ENCODE measurements at regions of chr12 and their contacts with region 1.

Region 1: GRCh38 chr12:133106253-133106652 is 23.8 kb downstream of the ZNF891 start:
- DNase-seq: no peak
- ATAC-seq: no peak
- H3K4me3 ChIP-seq: no peak overlapping the region
- H3K27ac ChIP-seq: no peak overlapping the region
- H3K4me1 ChIP-seq: no peaks in the 10 kb centered on the region
- H3K27me3 ChIP-seq: no peaks in the 10 kb centered on the region
- CTCF ChIP-seq: no peak
- EP300 ChIP-seq: no peak
- POLR2A ChIP-seq: no peak
- RAD21 ChIP-seq: no peak

Region 2: GRCh38 chr12:132858718-132859266 is 247.5 kb before region 1 on chr12:
- CTCF ChIA-PET with region 1: no interaction called
- POLR2A ChIA-PET with region 1: no interaction called
- RAD21 ChIA-PET with region 1: no interaction called
- SMC1A ChIA-PET with region 1: no interaction called
- in situ Hi-C with region 1: no loop called
- intact Hi-C with region 1: no loop called
- DNase-seq: no peak
- ATAC-seq: no peak
- H3K4me3 ChIP-seq: no peak overlapping the region
- H3K27ac ChIP-seq: no peak overlapping the region
- H3K4me1 ChIP-seq: no peaks in the 10 kb centered on the region
- H3K27me3 ChIP-seq: no peaks in the 10 kb centered on the region
- CTCF ChIP-seq: no peak
- EP300 ChIP-seq: no peak
- POLR2A ChIP-seq: no peak
- RAD21 ChIP-seq: no peak

Region 3: DNA sequence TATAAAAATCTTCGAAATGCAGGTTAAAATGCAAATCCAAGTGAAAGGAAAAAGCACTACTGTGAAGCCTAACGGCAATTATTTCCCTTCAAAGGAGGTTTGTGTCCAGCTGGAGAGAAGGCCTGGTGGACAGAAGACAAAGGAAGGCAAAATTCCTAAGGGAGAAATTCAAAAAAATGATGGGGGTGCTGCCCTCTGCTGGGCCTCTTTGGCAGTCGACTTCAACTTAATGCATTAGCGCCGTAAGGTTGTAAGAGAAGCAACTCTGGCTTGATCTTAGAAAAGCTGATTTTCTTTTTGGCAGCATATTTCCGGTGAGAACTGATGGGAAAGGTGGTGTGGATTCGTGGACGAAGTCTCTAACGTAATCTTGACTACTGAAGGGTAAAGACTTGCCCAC is 184.6 kb before region 1 on chr12:
- CTCF ChIA-PET with region 1: no interaction called
- POLR2A ChIA-PET with region 1: no interaction called
- RAD21 ChIA-PET with region 1: no interaction called
- SMC1A ChIA-PET with region 1: no interaction called
- in situ Hi-C with region 1: loop called (anchors 5 kb)
- intact Hi-C with region 1: no loop called
- DNase-seq: no peak
- ATAC-seq: no peak
- H3K4me3 ChIP-seq: no peak overlapping the region
- H3K27ac ChIP-seq: no peak overlapping the region
- H3K4me1 ChIP-seq: no peaks in the 10 kb centered on the region
- H3K27me3 ChIP-seq: no peaks in the 10 kb centered on the region
- CTCF ChIP-seq: 0 out of 6 replicates have a peak, but pooled peaks of 1 of the 3 experiments have one; percentile 14
- EP300 ChIP-seq: no peak
- POLR2A ChIP-seq: no peak
- RAD21 ChIP-seq: no peak

Region 4: DNA sequence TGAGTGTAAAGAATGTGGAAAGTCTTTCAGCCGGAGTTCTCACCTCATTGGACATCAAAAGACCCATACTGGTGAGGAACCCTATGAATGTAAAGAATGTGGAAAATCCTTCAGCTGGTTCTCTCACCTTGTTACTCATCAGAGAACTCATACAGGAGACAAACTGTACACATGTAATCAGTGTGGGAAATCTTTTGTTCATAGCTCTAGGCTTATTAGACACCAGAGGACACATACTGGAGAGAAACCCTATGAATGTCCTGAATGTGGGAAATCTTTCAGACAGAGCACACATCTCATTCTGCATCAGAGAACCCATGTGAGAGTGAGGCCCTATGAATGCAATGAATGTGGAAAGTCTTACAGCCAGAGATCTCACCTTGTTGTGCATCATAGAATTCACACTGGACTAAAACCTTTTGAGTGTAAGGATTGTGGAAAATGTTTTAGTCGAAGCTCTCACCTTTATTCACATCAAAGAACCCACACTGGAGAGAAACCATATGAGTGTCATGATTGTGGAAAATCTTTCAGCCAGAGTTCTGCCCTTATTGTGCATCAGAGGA is 50.0 kb after region 1 on chr12:
- CTCF ChIA-PET with region 1: no interaction called
- POLR2A ChIA-PET with region 1: no interaction called
- RAD21 ChIA-PET with region 1: no interaction called
- SMC1A ChIA-PET with region 1: no interaction called
- in situ Hi-C with region 1: no loop called
- intact Hi-C with region 1: no loop called
- DNase-seq: no peak
- ATAC-seq: no peak
- H3K4me3 ChIP-seq: no peak overlapping the region
- H3K27ac ChIP-seq: no peak overlapping the region
- H3K4me1 ChIP-seq: no peaks in the 10 kb centered on the region
- H3K27me3 ChIP-seq: no peaks in the 10 kb centered on the region
- CTCF ChIP-seq: no peak
- EP300 ChIP-seq: no peak
- POLR2A ChIP-seq: no peak
- RAD21 ChIP-seq: no peak

Region 5: DNA sequence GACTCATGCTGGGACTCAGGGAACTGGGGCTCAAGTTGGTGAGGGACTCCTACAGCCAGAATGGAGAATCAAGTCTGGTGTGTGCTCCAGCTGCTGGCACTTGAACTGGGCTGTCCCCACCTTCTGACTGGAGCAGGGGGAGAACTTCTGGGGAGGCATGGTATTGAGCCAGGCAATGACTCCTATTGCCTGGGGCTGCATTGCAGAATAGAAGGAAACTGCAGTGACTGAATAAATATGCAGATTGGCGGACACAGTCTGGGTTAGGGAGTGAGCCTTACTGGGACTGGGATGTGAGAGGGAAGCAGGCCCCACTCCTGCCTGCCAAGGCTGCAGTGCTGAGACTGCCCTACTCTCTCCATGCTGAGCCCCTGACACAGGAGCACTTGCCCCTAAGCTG is 66.2 kb after region 1 on chr12:
- CTCF ChIA-PET with region 1: no interaction called
- POLR2A ChIA-PET with region 1: no interaction called
- RAD21 ChIA-PET with region 1: no interaction called
- SMC1A ChIA-PET with region 1: no interaction called
- in situ Hi-C with region 1: no loop called
- intact Hi-C with region 1: no loop called
- DNase-seq: no peak
- ATAC-seq: no peak
- H3K4me3 ChIP-seq: no peak overlapping the region
- H3K27ac ChIP-seq: no peak overlapping the region
- H3K4me1 ChIP-seq: no peaks in the 10 kb centered on the region
- H3K27me3 ChIP-seq: no peaks in the 10 kb centered on the region
- CTCF ChIP-seq: no peak
- EP300 ChIP-seq: no peak
- POLR2A ChIP-seq: no peak
- RAD21 ChIP-seq: no peak

Measured in GM12878 (cell line).